HEK293 (cell line): ENCODE measurements at regions of chr6 and their contacts with region 1.

Region 1: DNA sequence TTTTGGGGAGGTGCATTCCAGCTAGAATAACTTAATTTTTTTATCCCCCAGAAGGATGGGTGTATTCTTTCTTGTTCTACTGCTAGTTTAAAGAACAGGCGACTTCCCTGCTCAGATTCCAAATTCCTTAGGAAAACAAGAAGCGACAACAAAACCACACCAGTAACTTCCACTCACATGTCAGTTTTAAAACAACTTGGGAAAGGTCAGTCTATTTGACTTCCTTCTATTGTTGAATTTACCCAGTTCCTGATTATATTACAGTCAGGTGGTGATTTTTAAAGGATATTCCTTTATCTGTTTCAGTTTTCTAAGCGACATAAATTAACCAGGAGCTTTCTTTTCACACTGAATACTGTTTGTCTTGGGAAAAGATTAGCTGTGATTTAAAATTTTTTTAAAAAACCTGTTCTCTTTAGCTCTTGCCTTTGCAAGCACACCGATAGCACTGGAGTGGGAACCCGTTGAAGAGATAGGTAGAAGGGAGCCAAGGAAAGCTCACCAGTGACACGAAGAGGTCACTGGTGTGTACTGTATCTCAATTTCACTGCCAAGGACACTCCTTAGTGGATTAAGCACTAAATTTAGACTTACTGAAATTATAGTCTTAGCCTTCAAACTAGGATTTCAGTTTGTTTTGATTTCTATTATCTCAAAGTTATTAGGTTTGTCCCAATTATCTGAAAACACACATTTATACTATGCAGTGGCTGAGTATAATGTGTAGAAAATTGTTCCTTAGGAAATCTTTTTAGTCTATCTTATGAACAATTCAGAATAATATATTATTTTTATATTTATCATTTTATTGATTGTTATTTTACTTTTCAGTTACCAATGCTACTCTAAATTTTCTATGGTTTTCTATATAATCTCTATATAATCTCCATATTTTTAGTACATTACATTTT is 22.3 kb downstream of the MARCKS start:
- H3K4me3 ChIP-seq: no peak overlapping the region
- H3K27ac ChIP-seq: no peak overlapping the region
- H3K4me1 ChIP-seq: no peaks in the 10 kb centered on the region
- CTCF ChIP-seq: 0 out of 2 replicates have a peak, but pooled peaks have one; percentile 23

Region 2: DNA sequence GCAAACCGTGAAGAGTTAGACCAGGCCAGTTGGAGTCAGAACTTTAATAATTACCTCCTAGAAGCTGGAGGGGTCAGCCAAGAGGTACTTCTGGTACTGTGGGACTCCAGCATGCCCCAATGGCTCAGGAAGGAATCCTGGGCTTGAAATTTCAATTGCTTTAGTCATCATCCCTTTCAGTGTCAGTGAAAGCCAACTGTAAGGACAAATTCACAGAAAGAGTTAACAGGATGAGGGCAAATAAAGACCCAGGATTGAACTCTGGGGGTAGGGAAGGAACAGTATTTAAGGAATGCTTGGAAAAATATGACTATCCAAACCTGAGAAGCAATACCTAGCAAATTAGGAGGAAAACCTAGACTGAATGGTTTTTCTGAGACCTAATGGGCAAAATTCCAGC is 757.4 kb before region 1 on chr6:
- CTCF ChIA-PET with region 1: interaction called, 11 read pairs
- POLR2A ChIA-PET with region 1: no interaction called
- H3K4me3 ChIP-seq: no peak overlapping the region
- H3K27ac ChIP-seq: no peak overlapping the region
- H3K4me1 ChIP-seq: peaks cover 4% of the 10 kb centered on the region
- CTCF ChIP-seq: no peak

Region 3: DNA sequence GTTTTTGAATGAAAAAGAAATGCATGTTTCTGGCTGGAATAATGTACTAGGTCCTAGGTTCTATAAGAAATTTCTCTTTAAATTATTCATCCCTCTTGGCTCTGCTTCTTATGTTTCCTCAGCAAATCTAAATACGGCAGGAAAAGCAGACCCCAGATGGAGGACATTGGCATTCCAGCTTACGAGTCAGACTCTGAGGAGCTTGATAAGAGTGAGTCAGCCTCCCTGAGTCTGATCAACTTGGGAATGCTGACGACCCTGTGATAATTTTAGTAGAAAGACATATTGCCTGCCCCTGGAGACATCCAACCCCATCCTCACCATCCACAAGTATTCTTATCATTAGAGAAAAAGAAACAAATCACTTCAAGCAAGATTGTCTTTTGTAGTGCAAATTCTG is 532.0 kb before region 1 on chr6:
- CTCF ChIA-PET with region 1: interaction called, 10 read pairs
- POLR2A ChIA-PET with region 1: no interaction called
- H3K4me3 ChIP-seq: no peak overlapping the region
- H3K27ac ChIP-seq: no peak overlapping the region
- H3K4me1 ChIP-seq: no peaks in the 10 kb centered on the region
- CTCF ChIP-seq: no peak

Region 4: DNA sequence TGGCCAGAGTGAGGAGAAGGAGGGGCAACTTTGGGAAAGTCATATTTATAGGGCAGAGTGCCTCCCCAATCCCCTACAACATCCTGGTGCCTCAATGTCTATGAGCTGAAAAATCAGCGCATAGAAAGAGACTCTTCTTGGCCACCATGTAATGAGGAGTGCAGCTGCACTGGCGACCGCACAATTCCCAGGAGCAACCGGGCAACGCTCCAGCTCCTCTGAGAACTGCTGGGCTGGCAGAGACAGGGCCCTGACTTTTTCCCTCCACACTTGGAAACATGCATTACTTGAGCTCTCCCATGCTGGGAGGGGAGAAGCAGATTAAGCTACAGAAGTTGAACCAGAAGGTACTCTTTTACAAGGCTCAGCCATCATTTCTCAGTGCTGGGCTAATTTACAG is 53.7 kb before region 1 on chr6:
- CTCF ChIA-PET with region 1: no interaction called
- POLR2A ChIA-PET with region 1: no interaction called
- H3K4me3 ChIP-seq: no peak overlapping the region
- H3K27ac ChIP-seq: no peak overlapping the region
- H3K4me1 ChIP-seq: no peaks in the 10 kb centered on the region
- CTCF ChIP-seq: no peak

Region 5: DNA sequence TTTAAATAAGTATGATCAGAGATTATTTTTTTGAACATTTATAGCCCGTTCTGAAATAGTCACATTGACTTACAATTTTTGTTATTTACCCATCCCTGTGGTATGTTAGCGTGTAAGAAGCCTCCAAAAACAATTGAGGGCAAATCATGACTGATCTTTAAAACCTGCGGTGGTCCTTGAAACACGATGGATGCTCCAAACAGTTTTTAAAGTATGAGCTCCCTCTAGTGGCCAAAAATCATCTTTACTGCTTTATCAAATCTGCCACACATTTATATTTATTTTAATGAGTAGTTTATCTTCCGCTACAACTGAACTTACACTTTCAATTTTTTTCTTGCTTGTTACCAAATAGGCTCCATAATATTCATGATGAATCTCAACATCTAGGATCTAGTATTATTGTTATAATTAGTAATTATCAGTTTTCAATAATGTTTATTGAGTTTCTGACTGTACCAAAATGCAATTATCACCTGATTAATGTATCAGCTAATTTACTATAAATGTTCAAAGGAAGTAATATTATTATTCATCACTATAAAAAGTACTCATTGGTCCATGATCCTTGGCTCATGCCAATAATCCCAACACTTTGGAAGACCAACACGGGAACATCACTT is 29.9 kb after region 1 on chr6:
- CTCF ChIA-PET with region 1: interaction called, 20 read pairs
- POLR2A ChIA-PET with region 1: no interaction called
- H3K4me3 ChIP-seq: no peak overlapping the region
- H3K27ac ChIP-seq: no peak overlapping the region
- H3K4me1 ChIP-seq: no peaks in the 10 kb centered on the region
- CTCF ChIP-seq: peak; percentile 16; the same call in 1 of the 2 replicates